H1 (cell line): ENCODE measurements at regions of chr6 and their contacts with region 1.

Region 1: DNA sequence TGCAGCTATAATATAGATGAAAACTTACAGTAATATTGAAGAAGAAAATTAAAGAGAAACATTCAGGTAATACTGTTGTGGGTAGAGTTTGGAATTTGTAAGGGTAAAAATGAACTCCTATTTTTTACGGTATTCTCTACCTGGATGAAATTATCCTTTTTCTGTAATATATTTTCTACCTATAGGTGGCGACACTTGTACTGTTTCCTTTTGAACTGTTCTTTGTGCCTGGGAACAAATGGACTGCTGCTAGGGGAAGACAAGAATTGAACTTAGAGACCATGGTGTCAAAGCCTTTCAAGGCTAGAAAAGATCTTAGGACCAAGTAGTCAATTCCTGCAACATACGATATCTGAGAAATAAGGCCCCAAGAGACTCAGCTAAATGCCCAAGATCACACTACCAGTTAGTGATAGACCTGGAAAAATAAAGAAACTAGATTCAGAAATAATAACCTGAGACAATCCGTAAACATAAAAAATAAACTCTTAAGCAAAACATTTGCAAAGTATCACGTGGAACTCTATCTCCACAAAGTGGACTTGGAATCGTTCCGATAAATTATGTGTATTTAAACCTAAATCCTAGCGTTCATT is 383.8 kb downstream of the TFAP2A start:
- DNase-seq: no peak
- H3K4me3 ChIP-seq: no peak overlapping the region
- H3K27ac ChIP-seq: no peak overlapping the region
- H3K4me1 ChIP-seq: peaks cover 0 to 3% (median 0%) of the 10 kb centered on the region in 4 experiments; a peak in 4 of 7 replicates
- H3K27me3 ChIP-seq: no peaks in the 10 kb centered on the region
- CTCF ChIP-seq: peak in 2 of 3 experiments; percentile 43 to 44; a peak in 2 of 4 replicates
- EP300 ChIP-seq: no peak
- POLR2A ChIP-seq: no peak
- RAD21 ChIP-seq: peak; percentile 76 to 77

Region 2: DNA sequence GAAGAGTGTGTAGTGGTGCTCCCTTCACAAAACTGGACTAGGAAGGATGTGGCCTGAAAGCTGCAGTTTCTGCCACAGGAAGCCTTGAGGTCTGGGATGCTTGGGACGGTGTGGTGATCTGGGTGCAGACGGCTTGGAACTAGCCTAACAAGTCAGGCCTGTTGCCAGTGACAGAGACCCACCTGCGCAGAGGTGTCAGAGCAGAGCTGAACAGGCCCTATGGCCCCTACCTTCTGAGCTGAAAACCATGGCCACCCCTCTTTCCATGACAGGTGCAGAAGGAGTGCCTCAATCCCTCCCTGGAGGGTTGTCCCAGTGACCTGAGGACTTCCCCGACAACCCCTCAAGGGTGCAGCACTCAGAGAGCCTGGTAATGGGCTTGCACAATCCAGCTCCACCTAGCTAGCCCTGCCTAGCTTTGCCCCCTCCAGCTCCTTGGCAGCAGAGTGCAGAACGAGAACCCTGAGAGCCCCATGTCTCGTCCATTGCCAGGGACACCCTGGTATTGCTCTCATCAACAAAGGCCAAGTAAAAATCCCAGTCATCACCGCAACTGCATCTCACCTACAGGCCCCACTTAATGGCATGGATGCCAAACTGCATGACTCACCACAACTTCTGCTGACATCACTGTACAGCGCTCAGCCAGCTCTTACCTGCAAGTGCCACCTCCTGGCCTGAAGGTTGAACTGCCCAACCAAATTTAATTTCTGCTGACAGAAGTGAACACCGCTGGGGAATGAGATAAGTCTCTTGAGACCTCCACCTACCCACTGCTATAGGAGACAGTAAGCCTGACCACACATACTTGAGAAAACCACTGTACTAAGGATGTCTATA is 179.3 kb before region 1 on chr6:
- CTCF ChIA-PET with region 1: no interaction called
- POLR2A ChIA-PET with region 1: no interaction called
- DNase-seq: peak; percentile 46 to 47
- H3K4me3 ChIP-seq: no peak overlapping the region
- H3K27ac ChIP-seq: no peak overlapping the region
- H3K4me1 ChIP-seq: no peaks in the 10 kb centered on the region
- H3K27me3 ChIP-seq: no peaks in the 10 kb centered on the region
- CTCF ChIP-seq: peak; percentile 49 to 66 (median 50)
- EP300 ChIP-seq: no peak
- POLR2A ChIP-seq: no peak
- RAD21 ChIP-seq: peak; percentile 72 to 80

Region 3: DNA sequence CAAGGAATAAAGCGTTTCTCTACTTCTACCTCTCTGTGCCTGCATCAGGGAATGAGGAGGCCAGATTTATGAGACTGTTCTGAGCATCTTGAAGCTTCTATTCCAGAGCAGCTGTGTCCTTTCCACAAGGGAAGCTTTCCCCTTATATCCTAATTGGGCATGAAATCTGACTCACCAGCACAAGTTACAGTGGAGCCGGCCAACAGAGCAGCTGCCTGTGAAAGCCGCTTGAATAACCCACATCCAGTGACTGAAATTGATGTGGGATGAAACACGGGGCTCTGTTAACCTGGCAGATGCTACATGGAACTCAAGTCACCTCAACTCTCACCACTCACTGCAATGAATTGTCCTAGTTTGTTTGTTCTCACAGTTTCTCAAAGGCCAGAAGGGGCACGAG is 16.5 kb before region 1 on chr6:
- CTCF ChIA-PET with region 1: interaction called, 12 read pairs
- POLR2A ChIA-PET with region 1: no interaction called
- DNase-seq: no peak
- H3K4me3 ChIP-seq: no peak overlapping the region
- H3K27ac ChIP-seq: no peak overlapping the region
- H3K4me1 ChIP-seq: no peaks in the 10 kb centered on the region
- H3K27me3 ChIP-seq: peaks cover 0 to 1% (median 0%) of the 10 kb centered on the region in 4 experiments; a peak in 1 of 7 replicates
- CTCF ChIP-seq: no peak
- EP300 ChIP-seq: no peak
- POLR2A ChIP-seq: no peak
- RAD21 ChIP-seq: no peak

Region 4: GRCh38 chr6:10019851-10020250 is 11.2 kb before region 1 on chr6:
- CTCF ChIA-PET with region 1: interaction called, 11 read pairs
- POLR2A ChIA-PET with region 1: no interaction called
- DNase-seq: no peak
- H3K4me3 ChIP-seq: no peak overlapping the region
- H3K27ac ChIP-seq: no peak overlapping the region
- H3K4me1 ChIP-seq: no peaks in the 10 kb centered on the region
- H3K27me3 ChIP-seq: peaks cover 0 to 1% (median 0%) of the 10 kb centered on the region in 4 experiments; a peak in 1 of 7 replicates
- CTCF ChIP-seq: no peak
- EP300 ChIP-seq: no peak
- POLR2A ChIP-seq: no peak
- RAD21 ChIP-seq: no peak